OCI-LY7 (cell line): ENCODE measurements at regions of chr6 and their contacts with region 1.

Region 1: GRCh38 chr6:13286181-13286580 is 42.2 kb downstream of the TBC1D7 start:
- DNase-seq: peak; percentile 68
- H3K4me3 ChIP-seq: peak overlapping the region; percentile 7
- H3K27ac ChIP-seq: peak overlapping the region; percentile 62
- H3K4me1 ChIP-seq: peaks cover 38% of the 10 kb centered on the region
- CTCF ChIP-seq: no peak

Region 2: DNA sequence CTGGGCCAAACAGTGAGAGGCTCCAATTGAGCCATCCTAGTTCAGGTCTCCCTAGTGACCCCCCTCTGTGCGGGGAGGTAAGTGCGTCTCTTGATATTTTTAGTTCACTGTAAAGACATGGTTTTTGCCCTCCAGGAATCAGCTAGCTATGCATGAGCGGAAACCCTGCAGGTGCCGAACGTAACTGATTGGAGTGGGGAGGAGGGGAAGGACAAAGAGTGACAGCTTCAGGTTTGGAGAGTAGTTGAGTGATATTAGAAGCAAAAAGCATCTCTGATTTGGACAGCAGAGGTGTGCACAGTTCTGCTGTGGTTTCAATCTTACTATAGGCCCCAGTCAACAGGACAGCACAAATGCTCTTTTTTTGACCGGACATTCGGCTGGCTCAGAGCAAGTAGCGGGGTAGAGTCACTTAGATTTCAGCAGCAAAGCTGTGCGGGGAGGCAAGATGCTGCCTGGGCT is 10.4 kb after region 1 on chr6:
- CTCF ChIA-PET with region 1: interaction called, 8 read pairs
- POLR2A ChIA-PET with region 1: interaction called, 11 read pairs
- intact Hi-C with region 1: no loop called
- DNase-seq: peak; percentile 92
- H3K4me3 ChIP-seq: peak overlapping the region; percentile 33
- H3K27ac ChIP-seq: peak overlapping the region; percentile 71
- H3K4me1 ChIP-seq: peaks cover 69% of the 10 kb centered on the region
- CTCF ChIP-seq: peak; percentile 58

Region 3: GRCh38 chr6:13355043-13355951 is 69.1 kb after region 1 on chr6:
- CTCF ChIA-PET with region 1: no interaction called
- POLR2A ChIA-PET with region 1: no interaction called
- intact Hi-C with region 1: no loop called
- DNase-seq: peak; percentile 45
- H3K4me3 ChIP-seq: peak overlapping the region; percentile 54
- H3K27ac ChIP-seq: peak overlapping the region; percentile 89
- H3K4me1 ChIP-seq: peaks cover 58% of the 10 kb centered on the region
- CTCF ChIP-seq: no peak